CD4-positive, alpha-beta T cell (primary cell): ENCODE measurements at regions of chr7 and their contacts with region 1.

Region 1: GRCh38 chr7:22488643-22489462 is 11.1 kb downstream of the STEAP1B start:
- DNase-seq: peak; percentile 20 to 80 (median 46)
- ATAC-seq: peak; percentile 65
- H3K4me3 ChIP-seq: no peak overlapping the region
- H3K4me3 Mint-ChIP-seq: no peak overlapping the region
- H3K27ac ChIP-seq: no peak overlapping the region
- H3K27ac Mint-ChIP-seq: no peak overlapping the region
- H3K4me1 ChIP-seq: no peaks in the 10 kb centered on the region
- H3K4me1 Mint-ChIP-seq: no peaks in the 10 kb centered on the region
- H3K27me3 ChIP-seq: peaks cover 0 to 4% of the 10 kb centered on the region in 2 experiments
- H3K27me3 Mint-ChIP-seq: no peaks in the 10 kb centered on the region
- CTCF ChIP-seq: peak; percentile 91

Region 2: DNA sequence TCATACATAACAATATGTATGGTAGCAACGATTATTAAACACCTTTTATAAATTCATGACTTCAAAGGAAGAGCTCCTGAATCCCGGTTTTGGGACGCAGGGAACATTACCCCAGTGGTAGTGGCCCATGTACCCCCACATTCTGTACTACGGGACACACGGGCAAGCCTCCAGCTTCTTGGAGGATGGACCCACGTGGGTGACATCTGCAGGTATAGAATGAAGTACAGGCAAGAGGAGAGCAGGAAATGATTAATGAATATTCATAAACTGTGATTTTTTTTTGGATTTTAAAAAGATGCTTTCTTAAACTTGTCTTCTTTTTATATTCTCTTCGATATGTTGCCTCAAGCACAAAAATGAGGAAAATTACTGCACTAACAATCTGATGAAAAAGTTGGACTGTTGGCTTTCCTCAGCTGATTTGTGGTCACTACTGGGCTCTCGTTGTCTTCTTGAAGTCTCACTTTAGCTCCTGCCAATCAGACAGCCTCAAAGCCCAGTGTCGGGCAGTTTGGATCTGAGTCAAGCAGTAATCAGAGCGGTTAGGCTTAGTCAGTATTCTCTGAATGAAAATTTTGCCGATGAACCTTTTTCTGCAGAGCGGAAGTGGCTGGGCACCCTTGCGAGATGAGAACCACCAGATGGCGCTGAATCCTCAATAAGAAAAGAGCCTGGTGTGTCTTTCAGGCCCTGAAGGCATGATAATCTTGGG is 385.4 kb before region 1 on chr7:
- CTCF ChIA-PET with region 1: no interaction called
- POLR2A ChIA-PET with region 1: no interaction called
- intact Hi-C with region 1: loop called in 1 of 2 experiments (anchors 2 kb)
- DNase-seq: peak; percentile 9 to 74 (median 36)
- ATAC-seq: no peak
- H3K4me3 ChIP-seq: no peak overlapping the region
- H3K4me3 Mint-ChIP-seq: no peak overlapping the region
- H3K27ac ChIP-seq: no peak overlapping the region
- H3K27ac Mint-ChIP-seq: no peak overlapping the region
- H3K4me1 ChIP-seq: peaks cover 3% of the 10 kb centered on the region
- H3K4me1 Mint-ChIP-seq: no peaks in the 10 kb centered on the region
- H3K27me3 ChIP-seq: peaks cover 3% of the 10 kb centered on the region in 2 experiments
- H3K27me3 Mint-ChIP-seq: peaks cover 20% of the 10 kb centered on the region
- CTCF ChIP-seq: peak; percentile 73

Region 3: DNA sequence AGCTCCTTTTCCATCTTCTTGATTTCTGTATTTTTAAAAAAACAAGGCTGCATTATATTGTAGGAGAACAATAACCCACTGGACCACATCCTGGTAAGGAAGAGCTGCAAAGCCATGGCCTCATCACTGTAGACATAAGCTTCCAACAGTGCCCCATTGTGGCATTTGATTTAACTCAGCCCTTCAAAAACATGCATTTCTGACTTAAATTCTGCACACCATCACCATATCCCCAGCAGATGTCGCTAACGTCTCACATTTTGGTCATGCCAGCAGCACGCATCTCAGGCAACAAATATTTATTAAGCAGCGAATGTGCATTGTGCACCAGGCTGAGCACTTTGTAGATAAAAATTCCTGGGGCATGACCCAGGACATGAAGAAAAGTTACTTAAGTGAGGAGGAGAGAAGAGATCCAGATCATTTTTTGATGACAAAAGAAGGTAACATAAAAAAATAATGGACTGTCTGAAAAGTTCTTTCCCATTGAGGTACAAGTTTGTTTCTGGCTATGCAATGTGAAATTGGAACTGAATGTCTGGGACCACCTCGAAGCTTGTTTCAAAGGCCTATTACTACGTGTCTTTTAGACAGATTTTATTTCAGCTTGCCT is 378.5 kb before region 1 on chr7:
- CTCF ChIA-PET with region 1: interaction called, 3 read pairs
- POLR2A ChIA-PET with region 1: no interaction called
- intact Hi-C with region 1: loop called (anchors 1 kb)
- DNase-seq: peak; percentile 33 to 86 (median 50)
- ATAC-seq: peak; percentile 77
- H3K4me3 ChIP-seq: no peak overlapping the region
- H3K4me3 Mint-ChIP-seq: no peak overlapping the region
- H3K27ac ChIP-seq: no peak overlapping the region
- H3K27ac Mint-ChIP-seq: no peak overlapping the region
- H3K4me1 ChIP-seq: no peaks in the 10 kb centered on the region
- H3K4me1 Mint-ChIP-seq: no peaks in the 10 kb centered on the region
- H3K27me3 ChIP-seq: no peaks in the 10 kb centered on the region
- H3K27me3 Mint-ChIP-seq: peaks cover 5% of the 10 kb centered on the region
- CTCF ChIP-seq: peak; percentile 87